ENCODE measurements at regions of chr15 and their contacts with region 1.

Region 1: DNA sequence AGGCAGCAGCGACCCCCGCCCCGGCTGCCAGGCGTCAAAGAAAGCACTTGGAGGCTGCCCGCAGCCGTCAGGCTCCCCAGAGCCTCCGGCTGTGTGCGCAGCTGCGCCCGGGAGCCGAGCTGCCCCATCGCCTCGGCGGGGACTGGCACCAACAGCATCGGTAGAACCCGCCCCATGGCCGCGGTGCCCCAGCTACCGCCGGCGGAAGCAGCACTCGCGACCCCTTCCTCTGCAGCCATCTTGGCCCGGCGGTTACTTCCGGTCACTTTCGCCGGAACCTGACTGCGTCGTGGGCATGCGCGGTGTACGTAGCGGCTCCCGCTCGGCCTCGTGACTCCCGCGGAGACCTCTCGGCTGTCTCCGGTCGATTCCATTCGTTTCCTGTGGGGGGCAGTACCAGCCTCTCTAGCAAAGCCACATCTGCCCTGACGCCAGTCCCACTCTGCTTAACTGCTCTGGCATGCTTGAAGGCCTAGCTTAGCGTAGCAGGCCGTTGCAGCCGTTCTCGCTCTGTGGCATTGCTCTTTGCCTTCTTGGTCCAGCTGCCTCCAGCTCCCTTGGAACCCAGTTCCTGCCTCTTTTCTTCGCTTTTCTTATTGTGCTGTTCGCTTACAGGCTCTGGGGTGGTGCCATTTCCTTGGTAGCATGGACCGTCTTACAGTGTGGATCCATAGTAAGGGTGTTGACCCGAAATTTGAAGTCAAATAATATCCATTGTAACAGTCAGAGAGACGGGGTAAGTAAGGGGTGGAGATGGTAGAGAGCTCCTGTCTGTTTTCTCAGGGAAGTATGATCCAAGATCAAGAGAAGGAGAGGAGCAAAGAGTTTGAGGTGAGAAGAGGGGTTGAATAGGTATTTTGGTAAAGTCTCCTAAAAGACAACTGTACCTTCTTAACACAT is at the start of gene SPG11:
- DNase-seq: peak; percentile 99
- H3K4me3 Mint-ChIP-seq: peak within 1 kb of the TSS; percentile 99
- H3K27ac Mint-ChIP-seq: peak within 1 kb of the TSS; percentile 96
- H3K4me1 Mint-ChIP-seq: peaks cover 63% of the 10 kb centered on the region
- H3K27me3 Mint-ChIP-seq: no peaks in the 10 kb centered on the region
- total RNA-seq, gene SPG11: 69.2 to 77.6 TPM

Region 2: GRCh38 chr15:44385344-44385942 is 278.2 kb before region 1 on chr15:
- CTCF ChIA-PET with region 1: no interaction called
- POLR2A ChIA-PET with region 1: no interaction called
- DNase-seq: no peak
- H3K4me3 Mint-ChIP-seq: no peak overlapping the region
- H3K27ac Mint-ChIP-seq: peak overlapping the region; percentile 26
- H3K4me1 Mint-ChIP-seq: peaks cover 8% of the 10 kb centered on the region
- H3K27me3 Mint-ChIP-seq: no peaks in the 10 kb centered on the region

Region 3: DNA sequence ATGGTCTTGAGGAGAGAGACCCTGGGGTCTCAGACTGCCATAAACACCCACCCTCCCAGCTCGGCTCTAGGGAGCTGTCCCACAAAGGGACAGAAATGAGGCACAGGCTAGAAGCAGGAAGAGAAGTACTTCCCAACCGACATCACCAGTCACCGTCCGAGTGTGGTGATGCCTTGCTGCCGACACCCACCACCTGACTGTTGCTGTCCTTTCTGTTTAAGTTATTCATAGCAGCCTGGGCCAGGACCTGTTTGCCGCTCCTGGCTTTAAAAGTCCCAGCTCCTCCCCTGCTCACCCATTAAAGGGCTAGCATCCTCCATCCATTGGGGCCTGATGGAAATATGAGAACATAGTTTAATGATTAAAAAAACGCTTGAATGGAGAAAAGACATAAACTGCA is 13.0 kb after region 1 on chr15:
- CTCF ChIA-PET with region 1: interaction called, 54 read pairs
- POLR2A ChIA-PET with region 1: interaction called, 10 read pairs
- DNase-seq: peak; percentile 42
- H3K4me3 Mint-ChIP-seq: peak overlapping the region; percentile 53
- H3K27ac Mint-ChIP-seq: peak overlapping the region; percentile 90
- H3K4me1 Mint-ChIP-seq: peaks cover 84% of the 10 kb centered on the region
- H3K27me3 Mint-ChIP-seq: no peaks in the 10 kb centered on the region

Region 4: DNA sequence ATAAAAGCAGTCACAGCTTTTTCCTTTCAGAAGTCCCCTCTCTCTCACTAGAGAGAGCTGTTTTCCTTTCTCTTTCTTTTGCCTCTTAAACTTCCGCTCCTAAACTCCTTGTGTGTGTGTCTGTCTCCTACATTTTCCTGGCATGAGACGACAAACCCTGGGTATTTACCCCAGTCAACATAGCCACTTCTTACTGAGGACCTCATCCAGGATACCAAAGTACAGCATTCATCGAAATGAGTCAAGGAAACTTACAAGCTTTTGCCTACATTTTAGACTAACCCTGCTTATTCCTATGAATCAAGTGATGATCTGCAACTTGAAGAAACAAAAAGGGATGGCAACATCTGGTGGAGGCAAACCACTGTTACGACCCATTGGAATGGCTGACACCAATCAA is 30.8 kb after region 1 on chr15:
- CTCF ChIA-PET with region 1: interaction called, 10 read pairs
- POLR2A ChIA-PET with region 1: interaction called, 6 read pairs
- DNase-seq: no peak
- H3K4me3 Mint-ChIP-seq: no peak overlapping the region
- H3K27ac Mint-ChIP-seq: no peak overlapping the region
- H3K4me1 Mint-ChIP-seq: peaks cover 33% of the 10 kb centered on the region
- H3K27me3 Mint-ChIP-seq: peaks cover 12% of the 10 kb centered on the region

Region 5: GRCh38 chr15:44728576-44729407 is 65.1 kb after region 1 on chr15:
- CTCF ChIA-PET with region 1: interaction called, 92 read pairs
- POLR2A ChIA-PET with region 1: interaction called, 22 read pairs
- DNase-seq: peak; percentile 98
- H3K4me3 Mint-ChIP-seq: peak overlapping the region; percentile 100
- H3K27ac Mint-ChIP-seq: peak overlapping the region; percentile 100
- H3K4me1 Mint-ChIP-seq: peaks cover 71% of the 10 kb centered on the region
- H3K27me3 Mint-ChIP-seq: no peaks in the 10 kb centered on the region

Region 6: DNA sequence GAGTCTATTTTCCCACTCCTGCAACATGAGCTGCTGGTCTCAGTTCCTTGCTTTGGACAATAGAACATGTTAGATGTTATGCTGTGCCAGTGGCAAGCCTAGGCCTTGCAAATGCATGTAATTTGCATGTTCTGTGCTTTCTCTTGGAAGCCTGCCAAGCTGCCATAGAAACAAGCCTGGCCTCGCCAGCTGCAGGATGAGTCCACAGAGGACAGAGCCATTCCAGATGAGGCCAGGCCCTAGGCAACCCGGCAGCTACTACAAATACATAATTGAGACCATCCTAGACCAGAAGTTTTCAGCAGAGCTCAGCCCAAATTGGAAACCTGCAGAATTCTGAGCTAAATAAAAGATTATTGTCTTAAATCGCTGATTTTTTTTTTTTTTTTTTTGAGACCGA is 112.3 kb after region 1 on chr15:
- CTCF ChIA-PET with region 1: no interaction called
- POLR2A ChIA-PET with region 1: no interaction called
- DNase-seq: no peak
- H3K4me3 Mint-ChIP-seq: no peak overlapping the region
- H3K27ac Mint-ChIP-seq: no peak overlapping the region
- H3K4me1 Mint-ChIP-seq: peaks cover 7% of the 10 kb centered on the region
- H3K27me3 Mint-ChIP-seq: peaks cover 8% of the 10 kb centered on the region

Region 7: DNA sequence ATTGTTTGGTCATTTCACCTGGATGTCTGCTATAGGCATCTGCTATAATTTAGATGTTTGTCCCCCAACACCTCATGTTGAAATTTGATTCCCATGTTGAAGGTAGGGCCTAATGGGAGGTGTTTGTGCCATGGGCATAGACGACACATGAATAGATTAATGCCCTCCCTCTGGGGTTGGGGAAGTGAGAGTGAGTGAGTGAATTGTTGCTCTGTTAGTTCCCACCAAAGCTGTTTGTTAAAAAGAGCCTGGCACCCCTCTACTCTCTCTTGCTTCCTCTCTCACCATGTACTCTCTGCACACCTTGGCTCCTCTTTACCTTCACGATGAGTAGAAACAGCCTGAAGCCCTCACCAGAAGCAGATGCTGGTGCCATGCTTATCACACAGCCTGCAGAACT is 335.4 kb after region 1 on chr15:
- CTCF ChIA-PET with region 1: no interaction called
- POLR2A ChIA-PET with region 1: no interaction called
- DNase-seq: no peak
- H3K4me3 Mint-ChIP-seq: no peak overlapping the region
- H3K27ac Mint-ChIP-seq: no peak overlapping the region
- H3K4me1 Mint-ChIP-seq: no peaks in the 10 kb centered on the region
- H3K27me3 Mint-ChIP-seq: peaks cover 30% of the 10 kb centered on the region

Measured in activated CD4-positive, alpha-beta T cell treated with anti-CD3 and anti-CD28 coated beads, Interleukin-2, amount 10 ng/mL, durations not matched to agents 7 days and 5 days (primary cell).